MCF 10A (cell line): ENCODE measurements at regions of chr5 and their contacts with region 1.

Region 1: GRCh38 chr5:126339215-126339805 is 83.9 kb upstream of the GRAMD2B start:
- DNase-seq: peak; percentile 86
- H3K4me3 Mint-ChIP-seq: no peak overlapping the region
- H3K27ac Mint-ChIP-seq: no peak overlapping the region
- H3K4me1 Mint-ChIP-seq: peaks cover 5% of the 10 kb centered on the region
- H3K27me3 Mint-ChIP-seq: no peaks in the 10 kb centered on the region
- CTCF ChIP-seq: peak; percentile 85

Region 2: GRCh38 chr5:126253406-126253805 is 85.9 kb before region 1 on chr5:
- CTCF ChIA-PET with region 1: no interaction called
- POLR2A ChIA-PET with region 1: no interaction called
- intact Hi-C with region 1: no loop called
- DNase-seq: no peak
- H3K4me3 Mint-ChIP-seq: no peak overlapping the region
- H3K27ac Mint-ChIP-seq: no peak overlapping the region
- H3K4me1 Mint-ChIP-seq: no peaks in the 10 kb centered on the region
- H3K27me3 Mint-ChIP-seq: no peaks in the 10 kb centered on the region
- CTCF ChIP-seq: no peak

Region 3: GRCh38 chr5:126280846-126281245 is 58.5 kb before region 1 on chr5:
- CTCF ChIA-PET with region 1: no interaction called
- POLR2A ChIA-PET with region 1: no interaction called
- intact Hi-C with region 1: no loop called
- DNase-seq: no peak
- H3K4me3 Mint-ChIP-seq: no peak overlapping the region
- H3K27ac Mint-ChIP-seq: no peak overlapping the region
- H3K4me1 Mint-ChIP-seq: no peaks in the 10 kb centered on the region
- H3K27me3 Mint-ChIP-seq: no peaks in the 10 kb centered on the region
- CTCF ChIP-seq: no peak

Region 4: DNA sequence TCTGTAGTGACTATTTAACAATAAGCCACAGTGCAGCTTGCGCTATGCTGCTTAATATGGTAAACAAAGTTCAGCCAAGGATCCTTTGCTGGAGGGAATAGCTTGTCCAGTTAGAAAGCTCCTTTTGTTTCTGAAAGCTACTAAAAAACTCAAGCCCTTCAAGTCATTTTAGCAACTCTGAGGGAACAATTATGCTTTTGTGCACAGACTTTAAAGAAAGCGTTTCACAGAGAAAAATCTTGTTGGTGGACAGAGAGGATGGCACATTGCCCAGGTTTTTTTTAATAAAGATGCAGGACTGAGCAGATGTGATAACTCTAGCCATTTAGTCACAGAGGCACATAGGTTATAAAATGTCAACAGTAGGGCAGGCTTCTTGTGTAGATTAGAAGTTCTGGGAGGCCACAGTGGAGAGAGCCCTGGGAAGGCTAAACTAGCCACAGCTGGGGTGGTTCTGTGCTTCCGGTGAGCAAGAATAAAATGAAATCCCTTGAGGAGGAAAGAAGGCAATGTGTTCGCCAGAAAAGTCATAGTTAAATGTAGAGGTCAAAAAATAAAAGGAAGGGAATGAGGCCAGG is 192.3 kb after region 1 on chr5:
- CTCF ChIA-PET with region 1: interaction called, 13 read pairs
- POLR2A ChIA-PET with region 1: interaction called, 3 read pairs
- intact Hi-C with region 1: no loop called
- DNase-seq: no peak
- H3K4me3 Mint-ChIP-seq: no peak overlapping the region
- H3K27ac Mint-ChIP-seq: no peak overlapping the region
- H3K4me1 Mint-ChIP-seq: peaks cover 1% of the 10 kb centered on the region
- H3K27me3 Mint-ChIP-seq: no peaks in the 10 kb centered on the region
- CTCF ChIP-seq: no peak

Region 5: GRCh38 chr5:126544087-126544740 is 204.9 kb after region 1 on chr5:
- CTCF ChIA-PET with region 1: interaction called, 61 read pairs
- POLR2A ChIA-PET with region 1: interaction called, 7 read pairs
- intact Hi-C with region 1: loop called (anchors 1 kb)
- DNase-seq: peak; percentile 60
- H3K4me3 Mint-ChIP-seq: no peak overlapping the region
- H3K27ac Mint-ChIP-seq: peak overlapping the region; percentile 33
- H3K4me1 Mint-ChIP-seq: no peaks in the 10 kb centered on the region
- H3K27me3 Mint-ChIP-seq: no peaks in the 10 kb centered on the region
- CTCF ChIP-seq: peak; percentile 63